Head of caudate nucleus (tissue), 42 donors: ENCODE measurements at regions of chr7 and their contacts with region 1.

Region 1: DNA sequence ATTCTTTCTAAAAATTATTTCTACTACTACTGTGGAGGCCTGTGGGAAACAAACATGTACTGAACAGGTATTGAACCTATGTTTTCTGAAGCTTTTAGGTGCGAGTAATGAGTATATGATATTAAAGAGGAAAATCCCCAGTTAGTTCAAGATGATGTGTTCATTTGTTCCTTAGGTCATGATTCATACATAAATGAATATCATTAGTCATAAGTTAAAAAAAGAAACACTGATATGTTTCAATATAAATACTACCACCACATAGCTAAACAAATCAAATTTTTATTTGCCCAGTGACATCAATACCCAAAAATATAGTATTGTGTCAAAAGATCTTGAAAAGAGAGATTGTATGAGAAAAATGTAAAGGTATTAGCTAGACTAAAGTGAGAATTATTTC is 210.7 kb upstream of the GNAI1 start:
- DNase-seq: no peak

Region 2: GRCh38 chr7:79982141-79982770 is 58.3 kb after region 1 on chr7:
- intact Hi-C with region 1: loop called (anchors 10 kb)
- DNase-seq: no peak